ENCODE measurements at regions of chr4 and their contacts with region 1.

Region 1: GRCh38 chr4:38179690-38180377 is 219.6 kb downstream of the PTTG2 start:
- DNase-seq: peak; percentile 69 to 77 (median 70)
- H3K4me3 ChIP-seq: no peak overlapping the region
- H3K4me3 Mint-ChIP-seq: peak overlapping the region in 1 of 8 donors; percentile 8
- H3K27ac ChIP-seq: no peak overlapping the region
- H3K27ac Mint-ChIP-seq: peak overlapping the region in 5 of 7 donors; percentile 0 to 48 (median 35)
- H3K4me1 ChIP-seq: peaks cover 39% of the 10 kb centered on the region
- H3K4me1 Mint-ChIP-seq: peaks cover 29 to 58% (median 42%) of the 10 kb centered on the region in 4 donors
- H3K27me3 ChIP-seq: no peaks in the 10 kb centered on the region
- H3K27me3 Mint-ChIP-seq: no peaks in the 10 kb centered on the region

Region 2: GRCh38 chr4:37953620-37954293 is 226.1 kb before region 1 on chr4:
- CTCF ChIA-PET with region 1: no interaction called
- POLR2A ChIA-PET with region 1: no interaction called
- intact Hi-C with region 1: no loop called
- DNase-seq: no peak
- H3K4me3 ChIP-seq: no peak overlapping the region
- H3K4me3 Mint-ChIP-seq: no peak overlapping the region
- H3K27ac ChIP-seq: no peak overlapping the region
- H3K27ac Mint-ChIP-seq: peak overlapping the region in 2 of 7 donors; percentile 26 to 72
- H3K4me1 ChIP-seq: no peaks in the 10 kb centered on the region
- H3K4me1 Mint-ChIP-seq: peaks cover 0 to 13% (median 10%) of the 10 kb centered on the region in 4 donors
- H3K27me3 ChIP-seq: no peaks in the 10 kb centered on the region
- H3K27me3 Mint-ChIP-seq: no peaks in the 10 kb centered on the region

Region 3: GRCh38 chr4:38132107-38132673 is 47.6 kb before region 1 on chr4:
- CTCF ChIA-PET with region 1: interaction called, 5 read pairs
- POLR2A ChIA-PET with region 1: interaction called, 11 read pairs
- intact Hi-C with region 1: loop called (anchors 1 kb)
- DNase-seq: peak; percentile 74 to 88 (median 77)
- H3K4me3 ChIP-seq: peak overlapping the region in 1 of 2 donors; percentile 32
- H3K4me3 Mint-ChIP-seq: peak overlapping the region; percentile 45 to 87 (median 72)
- H3K27ac ChIP-seq: peak overlapping the region; percentile 59
- H3K27ac Mint-ChIP-seq: peak overlapping the region; percentile 87 to 99 (median 95)
- H3K4me1 ChIP-seq: peaks cover 60% of the 10 kb centered on the region
- H3K4me1 Mint-ChIP-seq: peaks cover 45 to 71% (median 55%) of the 10 kb centered on the region in 4 donors
- H3K27me3 ChIP-seq: no peaks in the 10 kb centered on the region
- H3K27me3 Mint-ChIP-seq: peaks cover 0 to 3% of the 10 kb centered on the region in 2 donors

Region 4: GRCh38 chr4:38281371-38282071 is 101.7 kb after region 1 on chr4:
- CTCF ChIA-PET with region 1: no interaction called
- POLR2A ChIA-PET with region 1: no interaction called
- intact Hi-C with region 1: no loop called
- DNase-seq: no peak
- H3K4me3 ChIP-seq: no peak overlapping the region
- H3K4me3 Mint-ChIP-seq: no peak overlapping the region
- H3K27ac ChIP-seq: no peak overlapping the region
- H3K27ac Mint-ChIP-seq: no peak overlapping the region
- H3K4me1 ChIP-seq: no peaks in the 10 kb centered on the region
- H3K4me1 Mint-ChIP-seq: peaks cover 0 to 2% (median under 1%) of the 10 kb centered on the region in 4 donors
- H3K27me3 ChIP-seq: no peaks in the 10 kb centered on the region
- H3K27me3 Mint-ChIP-seq: no peaks in the 10 kb centered on the region

Region 5: GRCh38 chr4:38310446-38311043 is 130.7 kb after region 1 on chr4:
- CTCF ChIA-PET with region 1: interaction called, 21 read pairs
- POLR2A ChIA-PET with region 1: interaction called, 3 read pairs
- intact Hi-C with region 1: loop called (anchors 2 kb)
- DNase-seq: peak; percentile 83 to 91 (median 86)
- H3K4me3 ChIP-seq: peak overlapping the region in 1 of 2 donors; percentile 41
- H3K4me3 Mint-ChIP-seq: peak overlapping the region; percentile 64 to 88 (median 76)
- H3K27ac ChIP-seq: peak overlapping the region; percentile 33
- H3K27ac Mint-ChIP-seq: peak overlapping the region; percentile 84 to 96 (median 92)
- H3K4me1 ChIP-seq: peaks cover 53% of the 10 kb centered on the region
- H3K4me1 Mint-ChIP-seq: peaks cover 39 to 71% (median 54%) of the 10 kb centered on the region in 4 donors
- H3K27me3 ChIP-seq: no peaks in the 10 kb centered on the region
- H3K27me3 Mint-ChIP-seq: no peaks in the 10 kb centered on the region

Region 6: GRCh38 chr4:38654273-38654672 is 474.4 kb after region 1 on chr4:
- CTCF ChIA-PET with region 1: interaction called, 12 read pairs
- POLR2A ChIA-PET with region 1: interaction called, 4 read pairs
- intact Hi-C with region 1: no loop called
- DNase-seq: peak; percentile 73 to 84 (median 76)
- H3K4me3 ChIP-seq: peak overlapping the region in 1 of 2 donors; percentile 4
- H3K4me3 Mint-ChIP-seq: peak overlapping the region; percentile 78 to 88 (median 81)
- H3K27ac ChIP-seq: peak overlapping the region; percentile 78
- H3K27ac Mint-ChIP-seq: peak overlapping the region; percentile 82 to 100 (median 99)
- H3K4me1 ChIP-seq: peaks cover 61% of the 10 kb centered on the region
- H3K4me1 Mint-ChIP-seq: peaks cover 39 to 69% (median 54%) of the 10 kb centered on the region in 4 donors
- H3K27me3 ChIP-seq: no peaks in the 10 kb centered on the region
- H3K27me3 Mint-ChIP-seq: no peaks in the 10 kb centered on the region

Region 7: GRCh38 chr4:38684951-38685844 is 505.4 kb after region 1 on chr4:
- CTCF ChIA-PET with region 1: interaction called, 13 read pairs
- POLR2A ChIA-PET with region 1: no interaction called
- intact Hi-C with region 1: no loop called
- DNase-seq: no peak
- H3K4me3 ChIP-seq: no peak overlapping the region
- H3K4me3 Mint-ChIP-seq: peak overlapping the region in 3 of 8 donors; percentile 36 to 82 (median 71)
- H3K27ac ChIP-seq: no peak overlapping the region
- H3K27ac Mint-ChIP-seq: peak overlapping the region in 4 of 7 donors; percentile 19 to 77 (median 46)
- H3K4me1 ChIP-seq: peaks cover 74% of the 10 kb centered on the region
- H3K4me1 Mint-ChIP-seq: peaks cover 58 to 85% (median 72%) of the 10 kb centered on the region in 4 donors
- H3K27me3 ChIP-seq: no peaks in the 10 kb centered on the region
- H3K27me3 Mint-ChIP-seq: no peaks in the 10 kb centered on the region

Region 8: GRCh38 chr4:38782452-38783108 is 602.7 kb after region 1 on chr4 and contains the start of gene TLR10:
- CTCF ChIA-PET with region 1: interaction called, 35 read pairs
- POLR2A ChIA-PET with region 1: no interaction called
- intact Hi-C with region 1: loop called (anchors 1 kb)
- DNase-seq: peak in 4 of 5 donors; percentile 26 to 50 (median 40)
- H3K4me3 ChIP-seq: no peak within 1 kb of the TSS
- H3K4me3 Mint-ChIP-seq: peak within 1 kb of the TSS in 4 of 8 donors; percentile 22 to 62 (median 43)
- H3K27ac ChIP-seq: no peak within 1 kb of the TSS
- H3K27ac Mint-ChIP-seq: no peak within 1 kb of the TSS
- H3K4me1 ChIP-seq: no peaks in the 10 kb centered on the region
- H3K4me1 Mint-ChIP-seq: peaks cover 2 to 5% (median 3%) of the 10 kb centered on the region in 4 donors
- H3K27me3 ChIP-seq: no peaks in the 10 kb centered on the region
- H3K27me3 Mint-ChIP-seq: peaks cover 0 to 2% of the 10 kb centered on the region in 2 donors
- total RNA-seq, gene TLR10: 0.20 to 0.28 TPM

Measured in CD4-positive, alpha-beta memory T cell (primary cell).